Activated CD4-positive, alpha-beta memory T cell treated with anti-CD3 and anti-CD28 coated beads for 36 hours (primary cell): ENCODE measurements at regions of chr3 and their contacts with region 1.

Region 1: DNA sequence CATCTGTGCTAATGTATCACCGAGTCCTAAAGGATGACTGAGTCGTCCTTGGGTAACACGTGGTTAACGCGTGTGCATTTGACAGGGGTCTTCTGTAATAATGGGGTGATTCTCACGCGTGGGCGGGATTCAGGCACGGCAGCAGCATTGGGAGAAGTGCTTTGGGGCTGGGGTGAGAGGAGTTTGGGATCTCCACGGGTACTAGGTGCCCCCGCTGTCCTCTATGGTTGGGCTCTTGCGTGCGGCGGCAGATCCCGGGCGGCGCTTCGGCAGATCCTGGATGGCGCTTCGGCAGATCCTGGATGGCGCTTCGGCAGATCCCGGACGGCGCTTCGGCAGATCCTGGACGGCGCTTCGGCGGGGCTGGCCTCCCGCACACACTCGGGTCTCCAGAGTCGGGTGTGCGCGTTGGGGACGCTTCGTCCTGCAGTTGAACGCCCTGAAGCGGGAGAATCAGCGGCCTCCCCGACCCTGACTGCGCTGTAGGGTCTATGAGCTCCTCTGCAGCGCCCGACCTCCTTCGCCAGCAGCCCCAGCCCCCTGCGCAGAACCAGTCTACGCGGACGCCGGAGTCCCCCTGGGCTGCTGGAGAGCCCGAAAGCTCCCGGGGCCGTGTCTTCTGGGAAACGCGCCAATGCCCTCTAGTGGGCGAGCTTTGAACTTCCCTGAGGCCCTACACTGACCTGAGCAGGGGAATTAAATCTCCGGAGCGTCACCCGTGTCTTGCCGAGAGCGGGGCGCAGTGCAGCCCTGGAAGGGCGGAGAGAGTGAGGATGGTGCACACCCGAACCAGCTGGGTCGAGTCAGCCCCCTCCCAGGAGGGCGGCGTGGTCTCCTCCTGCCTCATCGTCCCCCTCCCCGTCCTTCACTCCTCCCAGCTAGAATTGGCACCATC is 48.1 kb upstream of the EPHB3 start:
- DNase-seq: peak; percentile 88
- H3K4me3 Mint-ChIP-seq: peak overlapping the region; percentile 39
- H3K27ac Mint-ChIP-seq: no peak overlapping the region
- H3K4me1 Mint-ChIP-seq: peaks cover 8% of the 10 kb centered on the region
- H3K27me3 Mint-ChIP-seq: peaks cover 46% of the 10 kb centered on the region

Region 2: DNA sequence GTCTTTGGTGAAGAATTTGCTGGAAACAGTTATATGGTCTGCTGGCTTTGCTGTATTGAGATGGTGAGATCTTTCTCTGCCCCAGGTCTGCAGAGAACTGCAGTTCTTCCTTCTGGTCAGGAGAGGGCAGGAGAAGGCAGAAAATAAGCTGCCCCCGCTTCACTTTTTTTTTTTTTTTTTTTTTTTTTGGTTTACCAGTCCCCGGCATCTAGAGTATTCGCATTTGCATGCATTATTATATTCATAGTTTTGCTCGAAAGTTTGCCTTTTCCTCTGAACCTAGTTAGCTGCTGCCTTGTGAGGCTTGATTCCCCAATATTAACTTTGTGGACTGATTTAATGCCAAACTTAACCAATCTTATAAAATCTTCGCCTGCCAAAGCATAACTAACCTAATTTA is 618.2 kb before region 1 on chr3:
- CTCF ChIA-PET with region 1: interaction called, 13 read pairs
- POLR2A ChIA-PET with region 1: no interaction called
- intact Hi-C with region 1: no loop called
- DNase-seq: peak; percentile 41
- H3K4me3 Mint-ChIP-seq: no peak overlapping the region
- H3K27ac Mint-ChIP-seq: no peak overlapping the region
- H3K4me1 Mint-ChIP-seq: no peaks in the 10 kb centered on the region
- H3K27me3 Mint-ChIP-seq: peaks cover 15% of the 10 kb centered on the region

Region 3: DNA sequence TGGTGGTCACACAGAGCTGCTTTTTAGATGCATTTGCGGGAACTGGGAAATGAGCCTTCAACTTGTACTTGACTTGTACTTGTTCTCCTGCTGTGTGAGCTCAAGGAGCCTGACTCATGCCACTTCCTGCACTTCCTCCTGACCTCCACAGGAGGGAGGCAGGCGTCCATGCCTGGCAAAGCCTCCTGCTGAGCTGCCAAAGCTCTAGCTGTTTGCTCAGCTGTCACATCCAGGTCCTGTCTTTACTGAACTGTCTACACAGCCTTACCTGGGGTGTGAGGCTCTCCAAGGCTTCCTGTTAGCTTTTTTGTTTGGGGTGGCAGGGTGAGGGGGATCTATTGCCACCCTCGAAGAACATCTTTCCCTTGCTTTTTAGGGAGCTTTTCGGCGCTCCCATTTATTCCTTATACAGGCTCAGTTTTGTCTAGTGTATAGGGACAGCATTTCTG is 141.9 kb before region 1 on chr3:
- CTCF ChIA-PET with region 1: interaction called, 89 read pairs
- POLR2A ChIA-PET with region 1: interaction called, 4 read pairs
- intact Hi-C with region 1: no loop called
- DNase-seq: peak; percentile 76
- H3K4me3 Mint-ChIP-seq: no peak overlapping the region
- H3K27ac Mint-ChIP-seq: no peak overlapping the region
- H3K4me1 Mint-ChIP-seq: peaks cover 15% of the 10 kb centered on the region
- H3K27me3 Mint-ChIP-seq: peaks cover 4% of the 10 kb centered on the region

Region 4: GRCh38 chr3:184469423-184469822 is 44.1 kb before region 1 on chr3:
- CTCF ChIA-PET with region 1: interaction called, 28 read pairs
- POLR2A ChIA-PET with region 1: no interaction called
- intact Hi-C with region 1: loop called (anchors 2 kb)
- DNase-seq: peak; percentile 64
- H3K4me3 Mint-ChIP-seq: no peak overlapping the region
- H3K27ac Mint-ChIP-seq: no peak overlapping the region
- H3K4me1 Mint-ChIP-seq: peaks cover 6% of the 10 kb centered on the region
- H3K27me3 Mint-ChIP-seq: peaks cover 20% of the 10 kb centered on the region

Region 5: DNA sequence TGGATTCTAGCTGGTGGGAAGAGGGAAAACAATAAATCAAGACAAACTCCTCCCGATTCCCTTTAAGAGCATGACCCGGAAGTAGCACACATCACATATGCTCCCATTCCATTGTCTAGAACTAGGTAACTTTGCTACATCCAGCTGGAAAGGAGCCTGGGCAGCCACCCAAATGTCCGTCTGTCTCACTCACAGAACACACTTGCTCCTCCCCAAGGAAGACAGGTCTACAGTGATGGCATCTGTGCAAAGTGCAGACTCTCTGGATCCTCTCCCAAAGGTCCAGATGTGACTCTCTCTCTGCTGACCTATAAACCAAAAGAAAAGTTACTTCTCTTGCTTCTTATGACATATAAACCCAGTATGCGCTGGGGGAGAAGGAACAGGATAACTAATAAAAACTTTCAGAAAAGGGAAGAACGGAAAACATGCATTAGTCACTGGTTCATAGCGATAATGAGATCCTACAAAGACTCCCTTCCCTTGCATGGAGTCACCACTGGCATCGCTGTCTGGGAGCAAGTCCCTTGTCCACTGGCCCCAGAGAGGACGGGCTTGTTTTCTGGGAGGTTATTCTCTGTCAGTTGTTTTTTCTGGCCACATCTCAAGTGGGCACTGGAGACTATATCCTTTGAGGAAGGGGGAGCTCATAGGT is 18.2 kb after region 1 on chr3:
- CTCF ChIA-PET with region 1: interaction called, 77 read pairs
- POLR2A ChIA-PET with region 1: no interaction called
- intact Hi-C with region 1: no loop called
- DNase-seq: no peak
- H3K4me3 Mint-ChIP-seq: no peak overlapping the region
- H3K27ac Mint-ChIP-seq: no peak overlapping the region
- H3K4me1 Mint-ChIP-seq: no peaks in the 10 kb centered on the region
- H3K27me3 Mint-ChIP-seq: peaks cover 19% of the 10 kb centered on the region